AG04449 (cell line): ENCODE measurements at regions of chr20 and their contacts with region 1.

Region 1: DNA sequence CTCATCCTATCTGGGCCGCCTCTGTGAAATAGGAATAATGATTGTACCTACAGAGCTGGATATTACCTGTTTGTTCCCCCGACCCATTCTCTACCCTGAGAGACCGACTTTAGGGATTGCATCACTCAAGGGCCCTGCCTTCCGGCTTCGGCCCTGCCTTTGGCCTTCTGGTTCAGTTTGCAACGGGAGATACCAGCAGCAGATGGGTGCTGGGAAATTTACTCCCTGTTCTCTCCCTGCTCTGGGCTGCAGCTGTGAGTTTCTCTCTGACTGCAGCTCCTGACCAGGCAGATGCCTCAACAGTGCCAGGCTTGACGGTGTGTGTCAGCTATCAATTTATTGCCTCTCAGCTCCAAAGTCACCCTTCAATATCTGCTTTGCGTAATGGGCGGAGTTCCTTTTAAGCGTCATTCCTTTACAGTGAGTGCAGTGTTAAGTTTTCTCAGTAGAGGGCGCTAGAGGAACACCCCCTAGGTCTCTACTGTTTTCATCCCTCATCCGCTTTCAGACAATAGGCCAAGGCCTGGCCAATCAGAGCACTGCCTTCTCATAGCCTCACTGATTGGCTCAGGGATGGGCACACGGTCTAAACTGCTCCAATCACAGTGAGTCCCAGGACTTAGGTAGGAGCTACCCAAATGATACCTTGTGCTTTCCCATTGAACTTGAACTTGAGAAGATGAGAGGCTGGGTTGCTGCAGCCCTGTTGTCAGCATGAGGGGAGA is 30.0 kb downstream of the KCNG1 start:
- DNase-seq: no peak
- H3K4me3 ChIP-seq: no peak overlapping the region
- CTCF ChIP-seq: peak; percentile 57

Region 2: DNA sequence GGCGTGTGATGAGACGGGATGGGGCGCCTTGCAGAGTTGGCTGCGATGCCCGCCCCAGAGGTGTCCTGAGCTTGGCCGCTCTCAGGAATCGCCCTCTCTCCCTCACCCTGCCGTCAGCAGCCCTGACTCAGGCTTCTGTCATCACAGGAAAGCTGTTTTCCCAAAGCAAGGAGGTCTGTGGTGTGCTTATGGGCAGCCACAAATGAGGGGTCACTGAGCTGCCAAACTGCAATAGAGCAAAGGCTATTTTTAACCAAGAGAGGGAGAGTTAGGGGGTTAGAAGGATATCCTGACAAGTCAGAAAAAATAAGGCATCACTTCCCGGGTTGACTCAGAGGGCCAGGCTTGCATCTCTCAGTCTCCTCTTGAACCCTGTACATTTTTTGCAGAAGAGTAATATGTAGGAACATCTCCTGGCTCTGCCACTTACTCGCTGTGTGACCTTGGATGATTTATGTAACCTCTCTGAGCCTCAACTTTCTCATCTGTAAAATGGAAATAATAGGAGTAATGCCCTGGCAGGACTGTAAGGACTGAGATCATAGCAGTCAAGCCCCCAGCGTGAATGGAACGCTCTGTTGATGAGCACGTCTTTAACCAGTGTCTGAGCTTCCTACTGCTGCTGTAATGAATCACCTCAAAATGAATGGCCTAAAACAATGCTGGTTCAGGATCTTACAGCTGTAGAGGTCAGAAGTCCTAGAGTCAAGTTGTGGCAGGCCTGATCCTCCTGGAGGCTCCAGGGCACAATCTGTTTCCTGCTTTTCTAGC is 367.7 kb after region 1 on chr20:
- CTCF ChIA-PET with region 1: interaction called, 32 read pairs
- POLR2A ChIA-PET with region 1: no interaction called
- DNase-seq: peak; percentile 100
- H3K4me3 ChIP-seq: no peak overlapping the region
- CTCF ChIP-seq: no peak